Common myeloid progenitor, CD34-positive (primary cell): ENCODE measurements at regions of chr1 and their contacts with region 1.

Region 1: GRCh38 chr1:167599957-167600581 is 30.0 kb upstream of the RCSD1 start:
- DNase-seq: peak; percentile 64 to 79 (median 79)
- H3K4me3 ChIP-seq: peak overlapping the region in 1 of 7 experiments; percentile 29
- H3K27ac ChIP-seq: no peak overlapping the region
- H3K4me1 ChIP-seq: peaks cover 24 to 34% (median 33%) of the 10 kb centered on the region in 4 experiments
- H3K27me3 ChIP-seq: no peaks in the 10 kb centered on the region

Region 2: DNA sequence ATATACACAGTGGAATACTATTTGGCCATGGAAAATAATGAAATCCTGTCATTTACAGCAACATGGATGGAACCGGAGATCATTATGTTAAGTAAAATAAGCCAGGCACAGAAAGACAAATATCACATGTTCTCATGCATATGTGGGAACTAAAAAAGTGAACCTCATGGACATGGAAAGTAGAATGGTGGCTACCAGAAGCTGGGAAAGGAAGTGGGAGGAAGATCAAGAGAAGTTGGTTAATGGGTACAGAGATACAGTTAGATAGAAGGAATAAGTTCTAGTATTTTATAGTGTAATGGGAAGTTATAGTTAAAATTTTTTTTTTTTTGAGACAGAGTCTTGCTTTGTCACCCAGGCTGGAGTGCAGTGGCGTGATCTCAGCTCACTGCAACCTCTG is 11.7 kb before region 1 on chr1:
- CTCF ChIA-PET with region 1: interaction called, 10 read pairs
- POLR2A ChIA-PET with region 1: no interaction called
- DNase-seq: no peak
- H3K4me3 ChIP-seq: no peak overlapping the region
- H3K27ac ChIP-seq: no peak overlapping the region
- H3K4me1 ChIP-seq: peaks cover 0 to 8% (median 0%) of the 10 kb centered on the region in 4 experiments
- H3K27me3 ChIP-seq: no peaks in the 10 kb centered on the region

Region 3: GRCh38 chr1:167627865-167628641 is 28.0 kb after region 1 on chr1:
- CTCF ChIA-PET with region 1: interaction called, 156 read pairs
- POLR2A ChIA-PET with region 1: interaction called, 3 read pairs
- DNase-seq: peak; percentile 87 to 98 (median 96)
- H3K4me3 ChIP-seq: peak overlapping the region in 5 of 7 experiments; percentile 30 to 93 (median 75)
- H3K27ac ChIP-seq: peak overlapping the region; percentile 90 to 96
- H3K4me1 ChIP-seq: peaks cover 45 to 76% (median 66%) of the 10 kb centered on the region in 4 experiments
- H3K27me3 ChIP-seq: no peaks in the 10 kb centered on the region

Region 4: DNA sequence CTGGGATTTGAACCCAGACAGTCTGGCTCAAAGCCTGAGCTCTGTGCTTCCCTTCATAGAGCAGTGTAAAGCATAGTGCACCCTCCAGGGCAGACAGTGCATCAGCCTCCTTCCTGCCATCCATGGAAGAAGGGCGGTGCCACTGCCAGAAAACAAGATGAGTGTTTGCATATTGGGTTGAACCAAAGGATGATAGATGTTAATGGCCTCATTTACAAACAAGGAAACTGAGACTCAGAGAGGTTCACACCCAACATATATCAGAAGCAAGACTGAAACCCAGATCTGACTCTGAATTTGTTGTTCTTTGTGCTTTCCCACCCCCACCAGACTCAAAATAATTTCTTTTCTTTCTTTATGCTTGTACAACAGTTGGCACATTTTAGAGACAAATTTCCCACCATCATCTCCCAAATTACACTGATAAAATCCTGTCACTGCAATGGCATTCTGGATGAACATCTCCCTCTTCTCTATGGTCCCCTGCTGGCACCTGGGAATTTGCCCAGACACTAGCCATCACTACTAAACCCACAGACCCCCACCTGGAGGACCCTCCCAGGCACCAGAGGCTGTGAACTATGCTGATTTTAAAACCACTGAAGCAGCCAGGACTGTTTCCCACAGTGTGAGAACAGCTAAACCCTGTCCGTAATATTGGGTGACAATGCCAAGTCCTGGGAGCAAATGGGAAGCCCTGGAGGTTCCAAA is 76.3 kb after region 1 on chr1:
- CTCF ChIA-PET with region 1: interaction called, 13 read pairs
- POLR2A ChIA-PET with region 1: interaction called, 3 read pairs
- DNase-seq: no peak
- H3K4me3 ChIP-seq: no peak overlapping the region
- H3K27ac ChIP-seq: peak overlapping the region in 1 of 2 experiments; percentile 44
- H3K4me1 ChIP-seq: peaks cover 3 to 15% (median 4%) of the 10 kb centered on the region in 4 experiments
- H3K27me3 ChIP-seq: no peaks in the 10 kb centered on the region

Region 5: GRCh38 chr1:167697667-167698141 is 97.6 kb after region 1 on chr1:
- CTCF ChIA-PET with region 1: interaction called, 19 read pairs
- POLR2A ChIA-PET with region 1: no interaction called
- DNase-seq: peak; percentile 19 to 82 (median 68)
- H3K4me3 ChIP-seq: no peak overlapping the region
- H3K27ac ChIP-seq: no peak overlapping the region
- H3K4me1 ChIP-seq: peaks cover 0 to 17% (median 5%) of the 10 kb centered on the region in 4 experiments
- H3K27me3 ChIP-seq: no peaks in the 10 kb centered on the region

Region 6: GRCh38 chr1:167862432-167863076 is 262.5 kb after region 1 on chr1:
- CTCF ChIA-PET with region 1: no interaction called
- POLR2A ChIA-PET with region 1: no interaction called
- DNase-seq: no peak
- H3K4me3 ChIP-seq: no peak overlapping the region
- H3K27ac ChIP-seq: no peak overlapping the region
- H3K4me1 ChIP-seq: no peaks in the 10 kb centered on the region
- H3K27me3 ChIP-seq: no peaks in the 10 kb centered on the region